Activated CD8-positive, alpha-beta T cell treated with anti-CD3 and anti-CD28 coated beads for 36 hours (primary cell): ENCODE measurements at regions of chr11 and their contacts with region 1.

Region 1: DNA sequence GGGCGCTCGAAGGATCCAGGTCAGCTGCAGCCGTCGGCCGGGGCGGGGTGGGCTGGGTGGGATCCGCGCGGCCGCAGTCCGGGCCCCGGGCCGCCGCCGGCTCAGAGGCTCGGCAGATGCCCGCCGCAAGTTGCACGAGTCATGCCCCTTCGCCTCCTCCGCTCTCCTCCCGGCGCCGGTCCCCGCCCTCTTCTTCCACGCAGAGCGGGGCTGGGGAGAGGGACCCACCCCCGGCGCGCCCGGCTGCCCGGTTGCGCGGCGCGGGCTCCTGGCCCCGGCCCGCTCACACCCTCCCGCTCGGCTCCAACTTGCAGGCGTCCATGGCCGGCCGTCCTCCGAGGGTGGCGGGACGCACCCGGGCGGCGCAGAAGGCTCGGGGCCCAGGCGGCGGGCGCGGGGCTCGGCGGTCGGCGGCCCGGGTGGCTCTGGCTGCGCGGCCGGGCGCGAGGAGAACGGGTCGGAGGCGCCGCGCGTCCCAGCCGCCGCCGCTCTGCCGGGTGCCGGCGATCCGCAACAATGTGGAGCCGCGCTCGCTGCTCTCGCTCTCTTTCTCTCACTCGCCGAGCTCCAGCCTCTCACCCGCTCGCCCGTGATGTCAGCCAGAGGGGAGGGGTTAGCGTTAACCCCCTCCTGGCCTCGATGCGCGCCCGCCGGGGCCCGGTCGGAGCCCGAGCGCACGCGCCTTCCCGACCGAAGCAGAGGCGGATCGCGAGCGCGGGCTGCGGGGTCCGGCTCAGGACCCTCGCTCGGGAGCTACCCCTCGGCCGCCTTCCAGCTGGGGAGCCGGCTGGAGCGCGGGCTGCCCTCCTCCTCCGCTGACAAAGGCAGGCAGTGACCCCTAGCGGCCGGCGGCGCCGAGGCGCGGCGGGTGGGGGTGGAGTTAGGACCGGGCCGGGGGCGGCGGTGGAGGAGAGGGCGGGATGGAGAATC is at the start of gene NECTIN1:
- DNase-seq: peak; percentile 87
- ATAC-seq: peak; percentile 93
- H3K4me3 Mint-ChIP-seq: peak within 1 kb of the TSS; percentile 69
- H3K27ac Mint-ChIP-seq: no peak within 1 kb of the TSS
- H3K4me1 Mint-ChIP-seq: peaks cover 8% of the 10 kb centered on the region
- H3K27me3 Mint-ChIP-seq: peaks cover 21% of the 10 kb centered on the region
- CTCF ChIP-seq: peak; percentile 98
- total RNA-seq, gene NECTIN1: 2.6 to 3.8 TPM

Region 2: GRCh38 chr11:119666463-119667131 is 62.3 kb before region 1 on chr11:
- CTCF ChIA-PET with region 1: interaction called, 11 read pairs
- POLR2A ChIA-PET with region 1: interaction called, 3 read pairs
- intact Hi-C with region 1: no loop called
- DNase-seq: peak; percentile 73
- ATAC-seq: peak; percentile 97
- H3K4me3 Mint-ChIP-seq: no peak overlapping the region
- H3K27ac Mint-ChIP-seq: no peak overlapping the region
- H3K4me1 Mint-ChIP-seq: no peaks in the 10 kb centered on the region
- H3K27me3 Mint-ChIP-seq: no peaks in the 10 kb centered on the region
- CTCF ChIP-seq: peak; percentile 87

Region 3: GRCh38 chr11:119673759-119674336 is 55.1 kb before region 1 on chr11:
- CTCF ChIA-PET with region 1: interaction called, 38 read pairs
- POLR2A ChIA-PET with region 1: interaction called, 3 read pairs
- intact Hi-C with region 1: no loop called
- DNase-seq: peak; percentile 81
- ATAC-seq: peak; percentile 99
- H3K4me3 Mint-ChIP-seq: no peak overlapping the region
- H3K27ac Mint-ChIP-seq: no peak overlapping the region
- H3K4me1 Mint-ChIP-seq: peaks cover 10% of the 10 kb centered on the region
- H3K27me3 Mint-ChIP-seq: no peaks in the 10 kb centered on the region
- CTCF ChIP-seq: no peak

Region 4: GRCh38 chr11:119684361-119685110 is 44.4 kb before region 1 on chr11:
- CTCF ChIA-PET with region 1: interaction called, 11 read pairs
- POLR2A ChIA-PET with region 1: interaction called, 4 read pairs
- intact Hi-C with region 1: loop called (anchors 5 kb)
- DNase-seq: peak; percentile 43
- ATAC-seq: peak; percentile 79
- H3K4me3 Mint-ChIP-seq: no peak overlapping the region
- H3K27ac Mint-ChIP-seq: no peak overlapping the region
- H3K4me1 Mint-ChIP-seq: peaks cover 12% of the 10 kb centered on the region
- H3K27me3 Mint-ChIP-seq: peaks cover 2% of the 10 kb centered on the region
- CTCF ChIP-seq: no peak

Region 5: DNA sequence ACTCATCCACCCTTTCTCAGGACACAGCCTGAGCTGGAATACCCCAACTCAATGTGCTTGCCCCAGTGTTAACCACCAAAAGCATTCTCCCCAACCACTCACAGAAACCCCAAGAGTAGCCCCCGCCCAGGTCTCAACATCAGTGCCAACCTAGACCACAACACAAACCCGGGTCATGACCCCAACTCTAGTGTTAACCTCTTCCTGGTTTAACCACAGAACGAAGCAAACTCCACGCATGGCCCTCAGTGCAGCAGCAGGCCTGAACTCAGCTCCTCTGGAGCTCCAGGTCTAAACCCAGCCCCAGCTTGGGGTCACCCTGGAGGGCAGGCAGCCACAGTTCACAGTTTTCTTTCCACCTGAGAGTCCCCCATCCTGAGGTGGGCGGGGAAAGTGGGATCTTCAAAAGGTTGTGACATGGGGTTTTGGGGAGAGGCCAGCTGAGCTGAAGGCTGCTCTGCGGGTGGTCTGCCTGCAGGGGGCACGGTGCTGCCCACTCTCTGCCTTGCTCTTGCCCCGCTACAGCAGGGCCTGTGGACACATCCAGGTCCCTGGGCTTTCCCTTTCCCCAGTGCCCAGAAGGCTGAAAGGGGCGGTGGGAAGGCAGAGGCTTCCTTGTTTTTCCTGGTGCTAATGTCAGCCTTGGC is 37.8 kb before region 1 on chr11:
- CTCF ChIA-PET with region 1: interaction called, 25 read pairs
- POLR2A ChIA-PET with region 1: interaction called, 3 read pairs
- intact Hi-C with region 1: loop called (anchors 5 kb)
- DNase-seq: peak; percentile 71
- ATAC-seq: peak; percentile 79
- H3K4me3 Mint-ChIP-seq: no peak overlapping the region
- H3K27ac Mint-ChIP-seq: no peak overlapping the region
- H3K4me1 Mint-ChIP-seq: peaks cover 20% of the 10 kb centered on the region
- H3K27me3 Mint-ChIP-seq: peaks cover 2% of the 10 kb centered on the region
- CTCF ChIP-seq: peak; percentile 37

Region 6: DNA sequence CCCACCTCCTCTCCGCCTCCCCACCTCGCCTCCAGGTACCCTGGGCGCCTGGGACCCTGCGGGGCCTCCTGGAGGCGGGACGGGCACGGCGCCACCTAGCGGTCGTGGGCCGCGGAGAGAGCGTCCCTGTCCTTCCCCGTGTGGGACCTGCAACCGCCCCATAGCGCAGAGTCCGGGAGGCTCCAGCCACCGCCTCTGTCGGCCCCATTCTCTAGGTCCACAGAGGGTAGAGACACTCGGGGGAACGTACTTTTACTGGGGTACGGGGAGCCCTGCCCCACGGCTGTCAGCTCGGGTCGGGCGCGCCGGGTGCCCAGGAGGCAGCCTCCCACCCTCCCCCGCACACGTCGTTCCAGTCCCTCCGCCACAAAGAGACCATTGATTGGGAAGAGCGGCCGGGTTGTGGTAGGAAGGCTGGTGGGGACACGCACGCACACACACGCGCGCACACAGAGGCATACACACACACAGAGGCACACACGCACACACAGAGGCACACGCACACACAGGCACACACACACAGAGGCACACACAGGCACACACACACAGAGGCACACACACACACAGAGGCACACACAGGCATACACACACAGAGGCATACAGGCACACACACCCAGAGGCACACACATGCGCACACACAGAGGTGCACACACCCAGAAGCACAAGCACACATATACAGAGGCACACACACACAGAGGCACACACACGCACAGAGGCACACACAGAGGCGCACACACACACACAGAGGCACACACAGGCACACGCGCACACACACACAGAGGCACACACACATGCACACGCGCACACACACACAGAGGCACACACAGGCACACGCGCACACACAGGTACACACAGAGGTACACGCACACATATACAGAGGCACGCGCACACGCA is 12.7 kb after region 1 on chr11:
- CTCF ChIA-PET with region 1: interaction called, 25 read pairs
- POLR2A ChIA-PET with region 1: interaction called, 3 read pairs
- intact Hi-C with region 1: no loop called
- DNase-seq: peak; percentile 70
- ATAC-seq: peak; percentile 82
- H3K4me3 Mint-ChIP-seq: peak overlapping the region; percentile 22
- H3K27ac Mint-ChIP-seq: no peak overlapping the region
- H3K4me1 Mint-ChIP-seq: peaks cover 8% of the 10 kb centered on the region
- H3K27me3 Mint-ChIP-seq: peaks cover 25% of the 10 kb centered on the region
- CTCF ChIP-seq: peak; percentile 91

Region 7: GRCh38 chr11:119774172-119774763 is 45.4 kb after region 1 on chr11:
- CTCF ChIA-PET with region 1: no interaction called
- POLR2A ChIA-PET with region 1: no interaction called
- intact Hi-C with region 1: no loop called
- DNase-seq: peak; percentile 37
- ATAC-seq: no peak
- H3K4me3 Mint-ChIP-seq: no peak overlapping the region
- H3K27ac Mint-ChIP-seq: no peak overlapping the region
- H3K4me1 Mint-ChIP-seq: no peaks in the 10 kb centered on the region
- H3K27me3 Mint-ChIP-seq: peaks cover 9% of the 10 kb centered on the region
- CTCF ChIP-seq: no peak